ENCODE measurements at regions of chr7 and their contacts with region 1.

Region 1: GRCh38 chr7:88169717-88170320 is 50.0 kb downstream of the SRI start:
- DNase-seq: peak; percentile 5
- ATAC-seq: peak; percentile 29; the same call in 1 of the 2 replicates
- H3K4me3 ChIP-seq: no peak overlapping the region
- H3K27ac ChIP-seq: no peak overlapping the region
- H3K4me1 ChIP-seq: no peaks in the 10 kb centered on the region
- H3K27me3 ChIP-seq: no peaks in the 10 kb centered on the region
- CTCF ChIP-seq: peak; percentile 52
- POLR2A ChIP-seq: no peak
- RAD21 ChIP-seq: peak; percentile 16

Region 2: GRCh38 chr7:87506246-87507180 is 663.3 kb before region 1 on chr7:
- CTCF ChIA-PET with region 1: no interaction called
- POLR2A ChIA-PET with region 1: no interaction called
- dilution Hi-C with region 1: no loop called
- in situ Hi-C with region 1: no loop called
- intact Hi-C with region 1: loop called (anchors 2 kb)
- DNase-seq: peak; percentile 43
- ATAC-seq: peak; percentile 57; the same call in 1 of the 2 replicates
- H3K4me3 ChIP-seq: no peak overlapping the region
- H3K27ac ChIP-seq: no peak overlapping the region
- H3K4me1 ChIP-seq: peaks cover 3% of the 10 kb centered on the region; the same call in 1 of the 2 replicates
- H3K27me3 ChIP-seq: peaks cover 2% of the 10 kb centered on the region; the same call in 1 of the 2 replicates
- CTCF ChIP-seq: peak; percentile 70
- POLR2A ChIP-seq: no peak
- RAD21 ChIP-seq: peak; percentile 68

Region 3: DNA sequence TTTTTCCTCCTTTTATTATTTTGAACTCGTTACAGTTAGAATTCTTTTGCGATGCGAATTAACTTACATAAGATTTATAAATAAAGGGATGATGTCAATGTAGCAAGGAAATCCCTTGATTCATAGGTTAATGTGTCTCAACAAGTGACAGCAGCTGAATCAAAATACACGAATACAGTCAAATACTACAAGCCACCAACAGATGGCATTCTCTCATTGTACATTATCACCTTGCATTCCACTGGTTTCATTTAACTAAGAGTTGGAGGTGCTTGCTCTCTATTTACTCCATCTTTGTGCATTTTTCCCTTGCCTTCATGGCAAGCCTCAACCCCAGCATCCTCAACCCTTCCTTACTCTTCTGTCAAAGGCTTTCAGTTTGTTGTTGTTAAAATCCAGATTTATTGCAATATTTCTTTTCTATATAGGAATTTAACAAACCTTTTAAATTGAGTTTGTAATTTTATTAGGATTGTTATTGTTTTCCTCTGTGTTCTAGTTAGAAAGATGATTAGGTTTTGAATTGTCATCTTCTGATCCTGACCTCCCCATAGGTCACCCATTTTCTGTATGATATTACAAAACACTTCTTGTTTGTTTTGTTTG is 371.9 kb before region 1 on chr7:
- CTCF ChIA-PET with region 1: no interaction called
- POLR2A ChIA-PET with region 1: no interaction called
- dilution Hi-C with region 1: no loop called
- in situ Hi-C with region 1: no loop called
- intact Hi-C with region 1: loop called (anchors 10 kb)
- DNase-seq: peak; percentile 47
- ATAC-seq: peak; percentile 79
- H3K4me3 ChIP-seq: no peak overlapping the region
- H3K27ac ChIP-seq: no peak overlapping the region
- H3K4me1 ChIP-seq: no peaks in the 10 kb centered on the region
- H3K27me3 ChIP-seq: no peaks in the 10 kb centered on the region
- CTCF ChIP-seq: peak; percentile 67
- POLR2A ChIP-seq: no peak
- RAD21 ChIP-seq: peak; percentile 70

Region 4: DNA sequence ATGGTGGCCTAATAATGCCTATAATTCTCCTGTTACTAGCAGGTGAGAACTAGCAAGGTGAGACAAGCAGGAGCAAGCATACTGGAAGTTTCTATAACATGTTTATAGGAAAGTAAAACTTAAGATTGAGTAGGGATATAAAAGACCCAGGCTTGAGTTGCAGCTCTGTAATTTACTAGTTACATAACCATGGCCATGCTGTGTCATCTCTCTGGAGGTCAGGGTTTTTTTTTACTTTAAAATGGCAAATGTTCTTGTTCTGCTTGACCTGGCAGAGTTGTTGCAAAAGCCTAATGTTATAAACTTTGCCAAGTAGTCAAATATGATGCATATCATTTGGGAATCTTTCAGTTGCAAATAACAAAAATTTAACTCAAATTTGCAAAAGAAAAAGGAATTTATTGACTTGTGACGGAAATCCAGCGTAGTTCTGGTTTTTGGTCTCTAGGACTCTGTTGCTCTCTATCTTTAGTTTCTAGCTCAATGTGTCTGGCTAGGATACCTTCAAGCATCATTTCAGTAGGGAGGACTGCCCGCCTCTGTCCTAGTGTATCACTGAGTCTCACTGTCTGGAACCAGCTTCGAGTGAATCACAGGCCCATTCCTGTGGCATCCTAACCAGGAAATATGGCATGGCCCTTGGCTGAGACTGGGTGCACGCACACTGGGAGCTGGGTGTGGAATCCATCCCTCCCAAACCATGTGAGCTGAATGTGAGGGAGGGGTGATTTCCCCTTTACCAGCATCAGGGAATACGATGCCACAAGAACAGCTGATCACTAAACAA is 167.9 kb before region 1 on chr7:
- CTCF ChIA-PET with region 1: no interaction called
- POLR2A ChIA-PET with region 1: no interaction called
- dilution Hi-C with region 1: no loop called
- in situ Hi-C with region 1: no loop called
- intact Hi-C with region 1: no loop called
- DNase-seq: no peak
- ATAC-seq: no peak
- H3K4me3 ChIP-seq: no peak overlapping the region
- H3K27ac ChIP-seq: no peak overlapping the region
- H3K4me1 ChIP-seq: no peaks in the 10 kb centered on the region
- H3K27me3 ChIP-seq: no peaks in the 10 kb centered on the region
- CTCF ChIP-seq: no peak
- POLR2A ChIP-seq: no peak
- RAD21 ChIP-seq: no peak

Region 5: DNA sequence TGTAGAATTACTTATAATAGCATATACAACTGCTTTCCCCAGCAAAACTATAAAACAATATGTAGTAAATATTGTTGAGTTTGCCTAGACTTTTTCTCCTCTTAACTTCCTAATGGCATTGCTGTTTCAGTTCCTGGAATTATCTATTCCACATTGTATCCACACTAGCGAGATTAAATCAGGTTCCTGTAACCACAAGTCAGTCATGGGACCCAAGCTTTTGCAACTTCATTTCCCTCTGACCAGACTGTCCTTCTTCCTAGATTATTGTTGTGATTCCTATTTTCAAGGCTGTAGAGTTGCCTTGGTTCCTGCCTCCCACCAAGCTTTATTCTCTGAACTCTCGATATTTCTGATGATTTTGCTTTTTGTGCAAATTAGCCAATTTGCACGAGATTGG is 416.4 kb after region 1 on chr7:
- CTCF ChIA-PET with region 1: no interaction called
- POLR2A ChIA-PET with region 1: no interaction called
- dilution Hi-C with region 1: no loop called
- in situ Hi-C with region 1: no loop called
- intact Hi-C with region 1: no loop called
- DNase-seq: no peak
- ATAC-seq: no peak
- H3K4me3 ChIP-seq: no peak overlapping the region
- H3K27ac ChIP-seq: no peak overlapping the region
- H3K4me1 ChIP-seq: no peaks in the 10 kb centered on the region
- H3K27me3 ChIP-seq: no peaks in the 10 kb centered on the region
- CTCF ChIP-seq: no peak
- POLR2A ChIP-seq: no peak
- RAD21 ChIP-seq: no peak

Measured in IMR-90 (cell line).